AG04449 (cell line): ENCODE measurements at regions of chr2 and their contacts with region 1.

Region 1: GRCh38 chr2:189287982-189288521 is 108.5 kb upstream of the COL5A2 start:
- DNase-seq: peak; percentile 61
- H3K4me3 ChIP-seq: no peak overlapping the region
- CTCF ChIP-seq: peak; percentile 30

Region 2: GRCh38 chr2:189115126-189115525 is 172.9 kb before region 1 on chr2:
- CTCF ChIA-PET with region 1: interaction called, 15 read pairs
- POLR2A ChIA-PET with region 1: interaction called, 3 read pairs
- DNase-seq: no peak
- H3K4me3 ChIP-seq: no peak overlapping the region
- CTCF ChIP-seq: no peak

Region 3: GRCh38 chr2:189179570-189179950 is 108.5 kb before region 1 on chr2 and contains the start of gene COL5A2:
- CTCF ChIA-PET with region 1: interaction called, 20 read pairs
- POLR2A ChIA-PET with region 1: interaction called, 21 read pairs
- DNase-seq: peak; percentile 80
- H3K4me3 ChIP-seq: peak within 1 kb of the TSS; percentile 79
- CTCF ChIP-seq: no peak

Region 4: DNA sequence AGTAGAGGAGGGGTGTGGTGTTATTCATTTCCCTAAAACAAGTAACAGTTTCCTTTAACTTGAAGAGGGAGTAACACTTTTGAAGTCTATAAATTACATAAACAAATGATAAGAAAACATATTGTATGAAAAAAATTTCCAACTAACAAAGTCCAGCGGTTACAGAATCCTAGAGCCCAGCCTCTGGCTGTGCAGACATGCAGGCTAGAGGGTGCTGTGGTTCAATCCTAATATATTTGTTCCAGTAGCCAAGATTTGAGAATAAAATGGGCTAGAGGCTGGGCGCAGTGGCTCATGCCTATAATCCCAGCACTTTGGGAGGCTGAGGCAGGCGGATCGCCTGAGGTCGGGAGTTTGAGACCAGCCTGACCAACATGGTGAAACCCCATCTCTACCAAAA is 210.2 kb after region 1 on chr2:
- CTCF ChIA-PET with region 1: no interaction called
- POLR2A ChIA-PET with region 1: no interaction called
- DNase-seq: no peak
- H3K4me3 ChIP-seq: no peak overlapping the region
- CTCF ChIP-seq: no peak